ENCODE measurements at regions of chr1 and their contacts with region 1.

Region 1: DNA sequence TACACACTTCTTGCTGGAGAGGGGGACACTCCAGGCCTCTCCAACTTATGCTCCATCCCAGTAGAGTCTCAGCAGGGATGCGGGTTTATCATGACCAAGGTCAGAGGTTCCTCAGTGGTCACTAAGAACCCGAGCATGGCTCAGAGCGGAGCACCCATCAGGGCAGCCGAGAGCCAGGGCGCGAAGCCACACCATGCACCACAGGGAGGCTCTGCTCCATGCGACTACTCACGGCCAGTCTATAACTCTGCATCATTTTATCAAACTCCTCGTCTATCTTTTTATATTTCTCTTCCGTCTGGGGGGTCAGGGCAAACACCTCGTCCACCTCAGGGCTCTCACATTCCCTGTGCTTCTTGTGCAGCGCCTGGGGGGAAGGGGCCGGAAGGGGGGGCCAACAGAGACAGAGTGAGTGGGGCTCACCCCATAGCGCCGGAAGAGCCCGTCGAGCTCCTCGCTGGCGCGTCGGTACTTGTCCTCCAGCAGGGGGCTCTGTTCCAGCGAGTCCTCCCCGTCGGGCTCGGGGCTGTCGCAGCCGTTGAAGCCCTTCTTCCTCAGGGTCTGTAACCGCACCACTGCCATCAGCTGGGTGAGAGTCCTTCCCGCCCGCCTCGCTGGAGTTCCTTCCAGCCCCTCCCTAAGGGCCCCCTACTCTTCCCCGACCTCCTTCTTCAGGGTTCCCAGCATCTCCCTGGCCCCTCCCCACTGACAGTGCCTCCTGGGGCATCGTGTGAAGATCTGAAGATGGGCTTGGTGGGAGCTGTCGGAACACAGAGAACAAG is 20.0 kb downstream of the MEF2D start:
- DNase-seq: peak; percentile 94
- H3K4me3 ChIP-seq: peak overlapping the region in 1 of 8 donors; percentile 27
- H3K27ac ChIP-seq: peak overlapping the region; percentile 29 to 80 (median 60)
- H3K4me1 ChIP-seq: peaks cover 12 to 75% (median 53%) of the 10 kb centered on the region in 6 donors
- H3K27me3 ChIP-seq: no peaks in the 10 kb centered on the region
- CTCF ChIP-seq: peak; percentile 73 to 92 (median 82)
- POLR2A ChIP-seq: no peak

Region 2: GRCh38 chr1:156245451-156246232 is 235.0 kb before region 1 on chr1:
- intact Hi-C with region 1: no loop called
- DNase-seq: peak; percentile 84
- H3K4me3 ChIP-seq: peak overlapping the region; percentile 20 to 68 (median 36)
- H3K27ac ChIP-seq: peak overlapping the region in 2 of 8 donors; percentile 19 to 50
- H3K4me1 ChIP-seq: peaks cover 11 to 32% (median 17%) of the 10 kb centered on the region in 6 donors
- H3K27me3 ChIP-seq: peaks cover 0 to 30% (median 12%) of the 10 kb centered on the region in 7 donors
- CTCF ChIP-seq: no peak
- POLR2A ChIP-seq: no peak

Region 3: GRCh38 chr1:156601122-156601830 is 120.7 kb after region 1 on chr1 and contains the start of gene GPATCH4:
- intact Hi-C with region 1: loop called (anchors 10 kb)
- DNase-seq: peak; percentile 93
- H3K4me3 ChIP-seq: peak within 1 kb of the TSS; percentile 70 to 89 (median 80)
- H3K27ac ChIP-seq: peak within 1 kb of the TSS; percentile 71 to 88 (median 79)
- H3K4me1 ChIP-seq: peaks cover 8 to 41% (median 28%) of the 10 kb centered on the region in 6 donors
- H3K27me3 ChIP-seq: no peaks in the 10 kb centered on the region
- CTCF ChIP-seq: no peak
- POLR2A ChIP-seq: no peak
- total RNA-seq, gene GPATCH4: 14.9 to 49.6 (median 26.2) TPM

Region 4: GRCh38 chr1:156677616-156678596 is 197.3 kb after region 1 on chr1:
- intact Hi-C with region 1: no loop called
- DNase-seq: no peak
- H3K4me3 ChIP-seq: peak overlapping the region in 7 of 8 donors; percentile 46 to 73 (median 56)
- H3K27ac ChIP-seq: peak overlapping the region; percentile 35 to 87 (median 81)
- H3K4me1 ChIP-seq: peaks cover 3 to 65% (median 37%) of the 10 kb centered on the region in 6 donors
- H3K27me3 ChIP-seq: peaks cover 0 to 82% (median 33%) of the 10 kb centered on the region in 7 donors
- CTCF ChIP-seq: peak; percentile 50 to 91 (median 80)
- POLR2A ChIP-seq: no peak

Region 5: GRCh38 chr1:157963713-157964112 is 1483.1 kb after region 1 on chr1:
- intact Hi-C with region 1: no loop called
- DNase-seq: peak; percentile 84
- H3K4me3 ChIP-seq: no peak overlapping the region
- H3K27ac ChIP-seq: no peak overlapping the region
- H3K4me1 ChIP-seq: peaks cover 0 to 7% (median 5%) of the 10 kb centered on the region in 6 donors
- H3K27me3 ChIP-seq: peaks cover 0 to 45% (median 0%) of the 10 kb centered on the region in 7 donors
- CTCF ChIP-seq: peak; percentile 79 to 94 (median 88)
- POLR2A ChIP-seq: no peak

Measured in spleen (tissue), 13 donors.